ENCODE measurements at regions of chr1 and their contacts with region 1.

Region 1: DNA sequence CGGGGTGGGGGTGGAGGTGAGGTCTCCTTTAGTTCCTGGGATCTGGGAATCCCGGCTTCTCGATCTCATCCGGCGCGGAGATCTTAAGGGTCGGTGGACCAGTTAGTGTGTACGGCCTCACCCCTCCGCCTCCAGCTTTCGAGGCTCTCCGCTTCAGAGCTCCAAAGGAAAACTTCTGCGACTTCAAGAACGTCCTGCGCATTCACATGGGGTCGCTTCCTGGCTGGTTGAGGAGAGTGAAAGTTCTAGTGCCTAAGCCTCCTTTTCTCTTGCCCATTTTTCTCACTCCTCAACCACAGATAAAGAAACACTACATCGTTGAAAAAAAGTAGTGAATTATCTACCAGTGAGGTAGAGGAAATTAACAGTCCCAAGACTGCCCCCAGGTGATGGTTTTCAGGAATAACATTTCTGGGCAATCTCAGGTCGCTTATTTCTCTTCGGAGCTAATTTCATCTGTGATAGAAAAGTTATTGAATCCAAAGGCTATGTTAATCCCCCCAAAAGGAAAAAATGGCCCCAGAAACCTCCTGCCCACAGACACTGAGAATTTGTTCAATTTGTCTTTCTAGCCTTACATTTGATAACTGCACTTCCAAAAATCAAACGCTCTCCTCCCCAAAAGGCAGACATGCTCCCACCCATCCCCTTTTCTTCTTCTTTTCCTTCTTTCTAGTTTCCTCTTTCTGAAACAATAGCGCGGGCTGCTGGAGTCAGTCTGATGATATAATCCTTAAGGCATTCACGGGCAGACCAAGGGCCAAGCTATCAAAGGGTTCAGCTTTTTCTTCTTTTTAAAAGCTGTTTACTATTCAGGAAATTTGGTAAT is 20.6 kb upstream of the TBX15 start:
- DNase-seq: no peak
- ATAC-seq: peak; percentile 59 to 75
- H3K4me3 ChIP-seq: peak overlapping the region; percentile 35
- H3K27ac ChIP-seq: no peak overlapping the region
- H3K4me1 ChIP-seq: no peaks in the 10 kb centered on the region
- H3K27me3 ChIP-seq: no peaks in the 10 kb centered on the region

Region 2: DNA sequence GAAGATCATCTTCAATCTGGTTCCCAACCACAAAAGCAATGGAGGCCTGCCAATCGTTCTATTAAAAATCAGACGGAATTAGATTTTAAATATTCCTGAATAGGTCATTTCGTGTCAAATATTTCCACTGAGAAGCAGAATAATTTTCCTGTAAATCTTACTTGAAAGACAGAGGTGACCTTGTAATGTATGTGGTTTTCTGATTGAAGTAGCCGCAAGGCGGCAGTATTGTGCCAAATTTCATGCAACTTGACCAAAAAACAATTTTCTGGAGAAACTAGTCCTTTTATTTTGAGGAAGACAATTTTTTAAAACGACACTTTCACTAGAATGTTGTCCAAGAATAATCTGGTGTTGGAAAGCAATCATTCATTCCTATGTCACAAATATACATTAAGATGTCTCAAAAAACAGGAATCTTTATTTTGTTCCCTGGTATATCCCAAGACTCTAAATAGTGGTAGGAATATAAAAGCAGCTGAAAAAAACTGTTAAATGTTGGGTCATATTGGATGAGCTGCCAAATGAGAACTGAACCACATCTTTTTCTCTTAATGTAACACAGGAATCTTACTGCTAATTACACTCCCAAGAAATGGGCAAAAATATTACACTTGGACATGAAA is 857.3 kb before region 1 on chr1:
- intact Hi-C with region 1: loop called in 2 of 4 experiments (anchors 10 kb)
- DNase-seq: peak; percentile 42 to 78 (median 59)
- ATAC-seq: no peak
- H3K4me3 ChIP-seq: no peak overlapping the region
- H3K27ac ChIP-seq: no peak overlapping the region
- H3K4me1 ChIP-seq: no peaks in the 10 kb centered on the region
- H3K27me3 ChIP-seq: no peaks in the 10 kb centered on the region

Region 3: DNA sequence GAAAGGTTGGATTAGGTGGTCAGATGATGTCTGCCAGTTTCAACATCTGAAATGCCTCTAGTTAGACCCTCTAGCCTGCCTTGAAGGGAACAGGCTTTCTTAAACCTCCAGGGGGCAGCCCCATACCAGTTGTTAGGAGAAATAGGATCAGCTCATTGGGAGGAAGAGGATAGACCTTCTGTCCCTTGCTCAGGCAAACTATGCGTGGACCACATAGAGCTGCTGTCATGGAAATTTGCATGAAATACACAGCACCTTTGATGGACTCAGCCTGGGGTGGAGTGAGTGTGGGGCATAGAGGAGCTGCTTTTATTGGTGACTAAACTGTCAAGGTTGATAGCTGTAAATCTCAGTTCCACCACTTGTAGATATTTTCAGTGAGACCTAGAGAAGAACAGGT is 785.3 kb before region 1 on chr1:
- intact Hi-C with region 1: loop called in 2 of 4 experiments (anchors 5 to 10 kb)
- DNase-seq: peak in 1 of 3 donors; percentile 36
- ATAC-seq: no peak
- H3K4me3 ChIP-seq: no peak overlapping the region
- H3K27ac ChIP-seq: no peak overlapping the region
- H3K4me1 ChIP-seq: no peaks in the 10 kb centered on the region
- H3K27me3 ChIP-seq: no peaks in the 10 kb centered on the region